Vagina (tissue), 2 donors: ENCODE measurements at regions of chr3 and their contacts with region 1.

Region 1: GRCh38 chr3:114939920-114940319 is 207.2 kb downstream of the ZBTB20 start:
- DNase-seq: no peak
- H3K4me3 ChIP-seq: no peak overlapping the region
- H3K27ac ChIP-seq: no peak overlapping the region
- H3K4me1 ChIP-seq: no peaks in the 10 kb centered on the region
- H3K27me3 ChIP-seq: no peaks in the 10 kb centered on the region
- CTCF ChIP-seq: no peak
- POLR2A ChIP-seq: no peak

Region 2: DNA sequence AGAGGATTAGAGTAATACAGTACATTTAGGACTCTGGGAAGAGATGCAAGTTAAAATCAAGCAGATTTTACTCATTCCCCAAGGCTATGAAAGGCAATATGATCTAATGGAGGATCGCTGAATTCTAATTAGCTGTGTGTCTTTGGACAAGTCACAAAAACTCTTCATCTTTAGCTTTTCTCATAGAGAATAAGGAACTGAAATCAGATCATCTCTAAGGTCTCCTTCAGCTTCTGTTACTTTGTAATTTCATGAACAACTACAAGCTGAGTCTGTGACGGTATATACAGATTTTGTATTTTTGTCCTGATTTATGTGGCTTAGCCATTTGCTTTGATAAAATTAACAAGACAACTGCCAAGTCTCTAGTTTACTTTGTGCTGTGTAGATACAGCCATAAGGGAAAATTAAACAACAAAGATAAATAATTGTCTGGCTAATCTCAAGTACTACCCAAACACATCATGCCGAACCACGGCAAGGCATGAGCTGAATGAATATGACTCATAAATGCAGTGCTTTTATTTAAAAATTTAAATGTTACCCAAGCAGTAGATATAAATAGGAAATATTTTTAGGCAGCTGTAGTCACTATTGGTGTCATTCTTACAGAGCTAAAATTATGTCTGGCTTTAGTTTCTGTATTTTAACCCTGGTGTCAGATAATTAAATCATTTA is 764.9 kb after region 1 on chr3:
- intact Hi-C with region 1: loop called (anchors 5 kb)
- DNase-seq: no peak
- H3K4me3 ChIP-seq: no peak overlapping the region
- H3K27ac ChIP-seq: no peak overlapping the region
- H3K4me1 ChIP-seq: no peaks in the 10 kb centered on the region
- H3K27me3 ChIP-seq: no peaks in the 10 kb centered on the region
- CTCF ChIP-seq: no peak
- POLR2A ChIP-seq: no peak